ENCODE measurements at regions of chr11 and their contacts with region 1.

Region 1: GRCh38 chr11:77127232-77127911 is 674 bp upstream of the MYO7A start:
- DNase-seq: peak; percentile 35 to 81 (median 60)
- ATAC-seq: peak; percentile 83
- H3K4me3 ChIP-seq: peak overlapping the region; percentile 45 to 54
- H3K4me3 Mint-ChIP-seq: peak overlapping the region; percentile 72
- H3K27ac ChIP-seq: no peak overlapping the region
- H3K27ac Mint-ChIP-seq: no peak overlapping the region
- H3K4me1 ChIP-seq: peaks cover 10% of the 10 kb centered on the region
- H3K4me1 Mint-ChIP-seq: peaks cover 7% of the 10 kb centered on the region
- H3K27me3 ChIP-seq: no peaks in the 10 kb centered on the region
- H3K27me3 Mint-ChIP-seq: no peaks in the 10 kb centered on the region
- CTCF ChIP-seq: peak; percentile 96

Region 2: GRCh38 chr11:77113382-77114088 is 13.8 kb before region 1 on chr11:
- CTCF ChIA-PET with region 1: interaction called, 14 read pairs
- POLR2A ChIA-PET with region 1: no interaction called
- intact Hi-C with region 1: no loop called
- DNase-seq: peak in 2 of 9 experiments; percentile 20 to 36
- ATAC-seq: no peak
- H3K4me3 ChIP-seq: no peak overlapping the region
- H3K4me3 Mint-ChIP-seq: no peak overlapping the region
- H3K27ac ChIP-seq: no peak overlapping the region
- H3K27ac Mint-ChIP-seq: no peak overlapping the region
- H3K4me1 ChIP-seq: no peaks in the 10 kb centered on the region
- H3K4me1 Mint-ChIP-seq: no peaks in the 10 kb centered on the region
- H3K27me3 ChIP-seq: no peaks in the 10 kb centered on the region
- H3K27me3 Mint-ChIP-seq: no peaks in the 10 kb centered on the region
- CTCF ChIP-seq: no peak

Region 3: DNA sequence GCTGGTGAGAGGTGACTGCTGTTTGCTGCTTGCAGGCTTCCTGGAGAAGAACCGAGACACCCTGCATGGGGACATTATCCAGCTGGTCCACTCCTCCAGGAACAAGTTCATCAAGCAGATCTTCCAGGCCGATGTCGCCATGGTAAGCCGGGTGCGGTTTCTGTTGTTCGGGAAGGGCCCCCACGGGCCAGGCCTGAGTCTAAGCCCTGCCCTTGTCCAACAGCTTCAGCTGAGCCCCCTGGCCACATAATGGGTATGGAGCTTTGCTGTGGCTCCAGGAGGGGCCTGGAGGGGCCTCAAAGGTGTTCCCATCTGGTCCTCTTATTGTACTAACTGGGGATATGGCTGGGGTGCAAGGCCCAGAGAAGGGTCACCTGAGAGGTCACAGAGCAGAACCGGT is 38.6 kb after region 1 on chr11:
- CTCF ChIA-PET with region 1: interaction called, 11 read pairs
- POLR2A ChIA-PET with region 1: no interaction called
- intact Hi-C with region 1: no loop called
- DNase-seq: no peak
- ATAC-seq: no peak
- H3K4me3 ChIP-seq: no peak overlapping the region
- H3K4me3 Mint-ChIP-seq: no peak overlapping the region
- H3K27ac ChIP-seq: no peak overlapping the region
- H3K27ac Mint-ChIP-seq: no peak overlapping the region
- H3K4me1 ChIP-seq: no peaks in the 10 kb centered on the region
- H3K4me1 Mint-ChIP-seq: no peaks in the 10 kb centered on the region
- H3K27me3 ChIP-seq: no peaks in the 10 kb centered on the region
- H3K27me3 Mint-ChIP-seq: no peaks in the 10 kb centered on the region
- CTCF ChIP-seq: no peak

Region 4: DNA sequence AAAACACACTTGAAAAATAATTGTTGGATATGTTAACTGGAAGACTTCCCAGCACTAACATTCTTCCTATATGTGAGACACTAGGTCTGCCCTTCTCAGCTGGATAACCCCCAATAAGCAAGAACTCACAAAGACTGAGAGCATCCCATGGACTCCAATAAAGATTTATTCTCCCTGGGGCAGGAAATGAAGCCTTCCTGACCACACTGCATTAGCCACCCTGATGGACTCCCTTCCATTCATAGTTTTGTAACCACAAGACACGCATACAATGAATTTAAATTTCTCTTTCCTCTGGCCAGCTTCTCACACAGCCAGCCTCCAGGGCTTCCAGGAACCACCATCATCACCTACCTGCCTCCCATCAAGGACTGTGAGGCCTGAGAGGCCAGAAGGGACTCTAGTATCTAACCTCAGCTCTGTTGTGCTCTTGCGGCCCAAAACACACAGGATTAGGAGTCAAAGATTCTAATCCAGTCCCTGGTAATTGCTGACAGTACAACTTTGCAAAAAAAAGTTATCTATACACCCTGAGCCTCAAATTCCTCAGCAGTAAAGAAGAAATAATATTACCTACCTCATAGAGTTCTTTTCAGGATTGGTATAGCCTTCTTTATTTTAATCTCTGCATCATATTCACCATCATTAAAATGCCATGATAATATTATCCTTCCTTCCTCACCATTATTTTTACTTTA is 219.7 kb after region 1 on chr11:
- CTCF ChIA-PET with region 1: no interaction called
- POLR2A ChIA-PET with region 1: no interaction called
- intact Hi-C with region 1: no loop called
- DNase-seq: no peak
- ATAC-seq: no peak
- H3K4me3 ChIP-seq: no peak overlapping the region
- H3K4me3 Mint-ChIP-seq: no peak overlapping the region
- H3K27ac ChIP-seq: no peak overlapping the region
- H3K27ac Mint-ChIP-seq: no peak overlapping the region
- H3K4me1 ChIP-seq: no peaks in the 10 kb centered on the region
- H3K4me1 Mint-ChIP-seq: no peaks in the 10 kb centered on the region
- H3K27me3 ChIP-seq: no peaks in the 10 kb centered on the region
- H3K27me3 Mint-ChIP-seq: no peaks in the 10 kb centered on the region
- CTCF ChIP-seq: no peak

Region 5: GRCh38 chr11:77547863-77548551 is 420.6 kb after region 1 on chr11:
- CTCF ChIA-PET with region 1: interaction called, 43 read pairs
- POLR2A ChIA-PET with region 1: no interaction called
- intact Hi-C with region 1: loop called in 1 of 2 experiments (anchors 1 kb)
- DNase-seq: peak in 6 of 9 experiments; percentile 4 to 74 (median 34)
- ATAC-seq: no peak
- H3K4me3 ChIP-seq: no peak overlapping the region
- H3K4me3 Mint-ChIP-seq: no peak overlapping the region
- H3K27ac ChIP-seq: no peak overlapping the region
- H3K27ac Mint-ChIP-seq: no peak overlapping the region
- H3K4me1 ChIP-seq: no peaks in the 10 kb centered on the region
- H3K4me1 Mint-ChIP-seq: peaks cover 6% of the 10 kb centered on the region
- H3K27me3 ChIP-seq: no peaks in the 10 kb centered on the region
- H3K27me3 Mint-ChIP-seq: no peaks in the 10 kb centered on the region
- CTCF ChIP-seq: peak; percentile 66

Measured in CD8-positive, alpha-beta T cell (primary cell).